ENCODE measurements at regions of chr12 and their contacts with region 1.

Region 1: DNA sequence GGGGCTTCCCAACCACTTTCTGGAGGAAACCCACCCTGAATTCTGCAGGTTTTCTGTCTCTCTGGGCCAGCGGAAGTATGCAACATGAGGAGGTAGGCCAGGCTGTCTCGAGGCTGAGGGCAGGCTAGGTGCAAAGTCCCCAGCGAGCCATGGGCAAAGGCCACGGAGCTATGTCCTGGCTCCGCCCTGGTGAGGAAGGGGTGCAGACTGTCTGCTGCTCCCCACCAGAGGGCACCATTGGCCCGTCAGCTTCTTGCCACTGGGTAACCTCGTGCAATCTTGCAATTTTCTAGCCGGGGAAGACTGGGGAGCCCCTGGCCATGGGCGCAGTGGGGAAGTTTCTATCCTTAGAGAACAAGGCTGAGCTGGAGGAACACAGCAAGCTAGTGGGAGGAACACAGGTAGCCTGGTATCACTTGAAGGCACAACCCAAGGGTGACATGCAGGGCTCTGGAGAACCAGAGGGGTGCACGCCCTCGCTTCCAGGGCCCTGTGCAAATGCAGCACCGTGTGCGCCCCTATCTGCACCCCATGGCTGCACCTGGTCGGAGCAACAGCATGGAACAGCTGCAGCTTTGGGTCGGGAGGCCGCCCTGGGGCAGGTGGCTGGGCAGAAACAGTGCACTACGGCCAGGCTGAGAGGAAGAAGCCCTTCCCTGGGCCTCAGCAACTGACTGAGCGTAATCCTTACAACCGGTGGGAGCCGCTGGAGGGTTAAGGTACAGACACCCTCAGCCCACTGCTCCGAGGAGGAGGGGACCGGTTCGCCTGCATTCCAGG is 27.6 kb upstream of the RPLP0 start:
- ATAC-seq: peak; percentile 4 to 78 (median 74)
- H3K4me3 ChIP-seq: no peak overlapping the region
- H3K27ac ChIP-seq: peak overlapping the region; percentile 14 to 52
- H3K4me1 ChIP-seq: peaks cover 46 to 57% of the 10 kb centered on the region in 2 donors

Region 2: DNA sequence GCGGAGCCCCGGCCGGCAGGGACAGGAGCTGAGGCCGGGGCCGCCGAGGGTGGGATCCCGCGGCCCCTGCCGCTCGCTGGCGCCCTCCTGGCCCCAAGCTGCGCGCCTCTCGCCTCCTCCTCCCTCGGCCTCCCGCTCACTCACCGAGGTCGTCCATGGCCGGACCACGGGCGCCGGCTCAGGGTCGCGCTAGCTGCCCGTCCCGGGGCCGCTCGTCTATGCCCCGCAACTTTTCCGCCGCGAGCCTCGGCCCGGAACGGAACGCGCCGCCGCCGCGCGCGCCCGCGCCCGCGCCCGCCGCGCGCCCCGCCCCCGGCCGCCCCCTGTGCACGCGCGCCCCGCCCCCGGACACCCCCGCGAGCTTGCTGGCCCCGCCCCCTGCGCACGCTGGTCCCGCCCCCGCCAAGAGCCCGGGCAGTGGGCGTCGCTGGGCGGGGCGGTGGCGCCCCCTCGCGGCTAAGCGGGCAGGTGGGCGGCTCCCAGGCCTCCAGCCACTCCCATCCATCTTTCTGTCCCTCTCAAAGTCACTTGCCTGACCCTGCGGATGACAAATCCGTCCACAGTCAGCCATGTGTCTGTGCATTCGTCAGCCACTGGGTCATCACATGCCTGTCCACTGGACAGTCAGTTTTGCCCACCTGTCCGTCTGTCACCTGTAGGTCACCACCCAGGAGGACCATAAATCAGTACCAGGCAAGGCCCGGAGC is 37.1 kb after region 1 on chr12 and contains the start of gene PXN:
- in situ Hi-C with region 1: loop called in 2 of 9 experiments (anchors 5 to 10 kb)
- ATAC-seq: peak; percentile 66 to 95 (median 94)
- H3K4me3 ChIP-seq: peak within 1 kb of the TSS; percentile 46 to 87 (median 62)
- H3K27ac ChIP-seq: peak within 1 kb of the TSS in 1 of 2 donors; percentile 31
- H3K4me1 ChIP-seq: peaks cover 28 to 34% of the 10 kb centered on the region in 2 donors
- total RNA-seq, gene PXN: 10.1 to 52.6 (median 23.8) TPM

Region 3: GRCh38 chr12:120276734-120277133 is 48.3 kb after region 1 on chr12:
- in situ Hi-C with region 1: loop called in 1 of 9 experiments (anchors 10 kb)
- ATAC-seq: no peak
- H3K4me3 ChIP-seq: no peak overlapping the region
- H3K27ac ChIP-seq: no peak overlapping the region
- H3K4me1 ChIP-seq: no peaks in the 10 kb centered on the region

Region 4: GRCh38 chr12:120797677-120798642 is 569.5 kb after region 1 on chr12:
- in situ Hi-C with region 1: no loop called
- ATAC-seq: no peak
- H3K4me3 ChIP-seq: no peak overlapping the region
- H3K27ac ChIP-seq: no peak overlapping the region
- H3K4me1 ChIP-seq: peaks cover 0 to 10% of the 10 kb centered on the region in 2 donors